ENCODE measurements at regions of chr6 and their contacts with region 1.

Region 1: GRCh38 chr6:131116749-131117360 is 18.4 kb upstream of the AKAP7 start:
- DNase-seq: no peak

Region 2: GRCh38 chr6:130885392-130886192 is 231.3 kb before region 1 on chr6:
- intact Hi-C with region 1: loop called (anchors 2 kb)
- DNase-seq: no peak

Measured in cardiac septum (tissue), 1 donor.